ENCODE measurements at regions of chr16 and their contacts with region 1.

Region 1: GRCh38 chr16:30458561-30459394 is 13.1 kb upstream of the SEPHS2 start:
- DNase-seq: peak in 1 of 6 donors; percentile 31
- ATAC-seq: peak in 2 of 4 donors; percentile 60 to 73
- H3K4me3 ChIP-seq: no peak overlapping the region
- H3K27ac ChIP-seq: no peak overlapping the region
- H3K4me1 ChIP-seq: no peaks in the 10 kb centered on the region
- H3K27me3 ChIP-seq: no peaks in the 10 kb centered on the region
- CTCF ChIP-seq: no peak

Region 2: DNA sequence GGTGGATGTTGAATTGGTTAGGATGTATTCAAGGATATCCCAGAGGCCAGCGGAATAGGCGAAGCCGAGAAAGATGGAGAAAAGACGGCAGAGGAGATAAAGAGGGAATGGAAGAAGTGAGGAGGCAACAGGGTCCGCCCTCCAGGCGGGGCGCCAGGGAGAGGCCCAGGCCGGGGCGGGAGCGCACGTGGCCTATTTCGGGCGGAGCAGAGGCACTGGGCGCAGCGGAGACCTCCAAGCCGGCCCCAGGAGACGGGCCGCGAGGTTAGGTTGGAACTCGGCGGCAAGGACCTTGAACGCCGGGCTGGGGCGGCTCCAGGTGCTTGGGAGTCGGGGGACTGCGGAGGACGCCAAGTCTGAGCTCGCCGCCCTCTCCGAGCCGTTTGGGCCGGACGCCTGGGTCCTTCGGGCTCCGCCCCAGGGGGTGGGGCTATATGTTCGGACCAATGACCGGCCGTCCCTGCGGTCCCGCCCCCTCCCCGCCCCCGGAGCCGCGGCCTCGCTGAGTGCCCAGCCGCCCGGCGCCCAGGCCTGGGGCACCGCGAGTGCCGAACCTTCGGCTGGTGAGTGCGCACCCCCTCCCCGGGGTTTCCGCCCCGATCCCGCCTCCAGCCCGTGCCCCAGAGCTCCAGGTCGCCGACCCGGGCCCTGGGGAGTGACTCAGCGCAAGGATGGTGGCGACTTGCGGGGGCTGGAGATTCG is 51.5 kb before region 1 on chr16 and contains the start of gene ZNF771:
- intact Hi-C with region 1: no loop called
- DNase-seq: peak; percentile 92 to 98 (median 96)
- ATAC-seq: peak; percentile 94 to 96 (median 95)
- H3K4me3 ChIP-seq: peak within 1 kb of the TSS; percentile 52 to 66 (median 60)
- H3K27ac ChIP-seq: peak within 1 kb of the TSS; percentile 54 to 86 (median 79)
- H3K4me1 ChIP-seq: peaks cover 0 to 12% (median 5%) of the 10 kb centered on the region in 3 donors
- H3K27me3 ChIP-seq: no peaks in the 10 kb centered on the region
- CTCF ChIP-seq: no peak
- total RNA-seq, gene ZNF771: 1.5 to 5.0 (median 3.1) TPM

Region 3: GRCh38 chr16:30519120-30520049 is 60.6 kb after region 1 on chr16:
- intact Hi-C with region 1: loop called in 1 of 3 experiments (anchors 10 kb)
- DNase-seq: no peak
- ATAC-seq: peak in 1 of 4 donors; percentile 24
- H3K4me3 ChIP-seq: no peak overlapping the region
- H3K27ac ChIP-seq: no peak overlapping the region
- H3K4me1 ChIP-seq: no peaks in the 10 kb centered on the region
- H3K27me3 ChIP-seq: no peaks in the 10 kb centered on the region
- CTCF ChIP-seq: no peak

Region 4: GRCh38 chr16:30657866-30658730 is 199.3 kb after region 1 on chr16 and contains the start of gene FBRS:
- intact Hi-C with region 1: no loop called
- DNase-seq: peak; percentile 98 to 100 (median 100)
- ATAC-seq: peak; percentile 80 to 91 (median 83)
- H3K4me3 ChIP-seq: peak within 1 kb of the TSS; percentile 73 to 95 (median 91)
- H3K27ac ChIP-seq: peak within 1 kb of the TSS; percentile 91 to 100 (median 98)
- H3K4me1 ChIP-seq: peaks cover 18 to 25% (median 21%) of the 10 kb centered on the region in 3 donors
- H3K27me3 ChIP-seq: no peaks in the 10 kb centered on the region
- CTCF ChIP-seq: peak; percentile 71 to 90 (median 83)
- total RNA-seq, gene FBRS: 16.1 to 40.4 (median 21.9) TPM

Measured in pancreas (tissue), 10 donors.